ENCODE measurements at regions of chr14 and their contacts with region 1.

Region 1: GRCh38 chr14:91060351-91061055 is at the start of gene RPS6KA5:
- DNase-seq: peak; percentile 100
- H3K4me3 ChIP-seq: peak within 1 kb of the TSS; percentile 68 to 100 (median 71)
- H3K27ac ChIP-seq: peak within 1 kb of the TSS; percentile 75
- H3K4me1 ChIP-seq: peaks cover 22% of the 10 kb centered on the region
- H3K27me3 ChIP-seq: no peaks in the 10 kb centered on the region
- CTCF ChIP-seq: no peak
- POLR2A ChIP-seq: peak; percentile 41
- total RNA-seq, gene RPS6KA5: 5.4 and 8.8 TPM in 2 replicates

Region 2: DNA sequence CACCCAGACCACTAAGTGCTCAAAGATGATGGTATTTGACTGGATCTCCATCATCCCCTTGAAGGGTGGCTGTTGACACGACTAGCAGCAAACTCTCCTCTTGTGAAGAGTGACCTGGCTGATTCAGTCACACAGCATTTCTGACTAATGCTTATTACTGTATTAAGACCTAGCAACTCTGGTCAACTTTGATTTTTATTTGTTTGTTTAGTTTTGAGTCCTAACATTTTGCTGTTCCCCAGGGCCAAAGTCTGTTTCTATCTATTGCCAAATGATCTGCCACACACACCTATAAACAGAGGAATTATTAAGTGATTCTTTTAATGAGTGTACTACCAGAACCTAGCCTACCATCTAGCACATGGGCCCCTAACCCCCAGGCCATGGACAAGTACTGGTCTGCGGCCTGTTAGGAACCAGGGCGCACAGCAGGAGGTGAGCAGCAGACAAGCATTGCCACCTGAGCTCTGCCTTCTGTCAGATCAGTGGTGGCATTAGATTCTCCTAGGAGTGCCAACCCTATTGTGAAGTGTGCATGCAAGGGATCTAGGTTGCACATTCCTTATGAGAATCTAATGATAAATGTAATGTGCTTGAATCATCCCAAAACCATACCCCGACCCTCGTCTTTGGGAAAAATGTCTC is 120.1 kb before region 1 on chr14:
- CTCF ChIA-PET with region 1: no interaction called
- POLR2A ChIA-PET with region 1: no interaction called
- dilution Hi-C with region 1: no loop called
- intact Hi-C with region 1: no loop called
- DNase-seq: no peak
- H3K4me3 ChIP-seq: no peak overlapping the region
- H3K27ac ChIP-seq: no peak overlapping the region
- H3K4me1 ChIP-seq: no peaks in the 10 kb centered on the region
- H3K27me3 ChIP-seq: no peaks in the 10 kb centered on the region
- CTCF ChIP-seq: no peak
- POLR2A ChIP-seq: no peak

Region 3: GRCh38 chr14:91071773-91072172 is 11.3 kb after region 1 on chr14:
- CTCF ChIA-PET with region 1: interaction called, 10 read pairs
- POLR2A ChIA-PET with region 1: no interaction called
- dilution Hi-C with region 1: no loop called
- intact Hi-C with region 1: no loop called
- DNase-seq: no peak
- H3K4me3 ChIP-seq: no peak overlapping the region
- H3K27ac ChIP-seq: no peak overlapping the region
- H3K4me1 ChIP-seq: no peaks in the 10 kb centered on the region
- H3K27me3 ChIP-seq: no peaks in the 10 kb centered on the region
- CTCF ChIP-seq: no peak
- POLR2A ChIP-seq: no peak

Region 4: DNA sequence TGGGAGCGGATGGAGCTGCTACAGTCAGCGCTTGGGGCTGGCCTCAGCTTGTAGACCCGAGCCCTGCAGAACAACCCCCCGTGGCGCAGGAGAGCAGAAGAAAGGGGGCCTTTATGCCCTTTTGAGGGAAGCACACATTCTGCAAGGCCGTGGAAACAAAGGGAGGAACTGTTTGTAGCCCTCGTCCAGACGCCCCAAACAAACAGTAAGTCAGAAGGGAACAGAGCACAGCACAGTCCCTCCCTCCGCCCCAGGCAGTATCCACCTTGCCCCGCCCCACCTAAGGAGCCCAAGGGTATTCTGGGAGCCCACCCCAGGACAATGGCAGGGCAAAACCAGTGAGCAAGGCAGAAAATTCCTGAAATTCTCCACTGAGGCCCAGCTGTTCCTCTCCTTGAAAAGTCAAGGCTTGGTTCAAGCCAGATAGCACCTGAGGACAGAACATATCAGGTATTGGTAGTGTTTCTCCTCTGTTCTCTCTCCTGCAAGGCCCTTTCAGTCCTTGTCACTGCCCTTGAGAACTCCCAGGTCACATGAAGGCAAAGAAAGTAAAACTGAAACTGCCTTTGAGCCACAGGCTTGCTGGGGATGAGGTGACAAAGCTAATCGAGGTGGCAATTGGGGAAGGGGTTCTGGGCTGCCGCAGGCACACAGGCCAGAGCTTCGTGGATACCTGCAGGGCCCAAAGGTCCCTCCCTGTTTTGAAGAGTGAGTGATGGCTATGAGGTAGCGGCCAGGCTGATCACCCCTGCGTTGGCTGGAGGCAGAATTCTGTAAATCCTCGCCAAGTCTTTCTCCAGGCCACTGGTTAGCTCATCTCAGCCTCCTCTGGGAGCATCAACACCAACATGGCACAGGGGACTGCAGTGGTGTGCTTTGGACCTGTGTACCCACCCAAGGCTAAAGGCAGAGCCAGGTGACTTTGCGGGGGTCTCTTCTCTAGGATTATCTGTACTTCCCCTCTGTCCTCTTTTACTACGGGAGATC is 53.9 kb after region 1 on chr14:
- CTCF ChIA-PET with region 1: interaction called, 13 read pairs
- POLR2A ChIA-PET with region 1: interaction called, 3 read pairs
- dilution Hi-C with region 1: no loop called
- intact Hi-C with region 1: loop called (anchors 1 kb)
- DNase-seq: peak; percentile 91
- H3K4me3 ChIP-seq: peak overlapping the region; percentile 25 to 66 (median 31)
- H3K27ac ChIP-seq: peak overlapping the region; percentile 79
- H3K4me1 ChIP-seq: peaks cover 42% of the 10 kb centered on the region
- H3K27me3 ChIP-seq: no peaks in the 10 kb centered on the region
- CTCF ChIP-seq: no peak
- POLR2A ChIP-seq: peak; percentile 68

Region 5: GRCh38 chr14:91138511-91139359 is 78.2 kb after region 1 on chr14:
- CTCF ChIA-PET with region 1: interaction called, 11 read pairs
- POLR2A ChIA-PET with region 1: no interaction called
- dilution Hi-C with region 1: no loop called
- intact Hi-C with region 1: loop called (anchors 1 kb)
- DNase-seq: peak; percentile 82
- H3K4me3 ChIP-seq: no peak overlapping the region
- H3K27ac ChIP-seq: no peak overlapping the region
- H3K4me1 ChIP-seq: peaks cover 22% of the 10 kb centered on the region
- H3K27me3 ChIP-seq: no peaks in the 10 kb centered on the region
- CTCF ChIP-seq: peak; percentile 45 to 52
- POLR2A ChIP-seq: no peak

Region 6: DNA sequence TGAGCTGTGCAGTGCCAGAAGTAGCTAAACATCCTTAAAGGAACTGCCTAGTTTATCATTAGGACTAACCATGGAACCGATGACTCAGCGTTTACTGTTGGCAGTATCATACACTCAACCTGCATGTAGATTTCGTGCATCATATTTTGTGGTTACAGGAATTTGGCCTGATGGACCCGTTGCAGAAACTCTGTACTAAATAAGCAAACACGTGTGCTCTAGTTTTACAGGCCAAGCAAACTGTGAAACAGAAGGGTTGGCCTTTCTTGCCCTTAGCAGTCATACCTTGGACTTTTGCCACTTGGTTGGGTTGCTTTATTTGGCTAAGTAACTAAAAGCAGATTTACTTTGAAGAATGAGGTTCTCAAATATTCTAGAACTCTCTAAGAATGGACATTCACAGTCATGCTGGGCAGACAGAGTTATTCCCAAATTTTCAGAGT is 89.0 kb after region 1 on chr14:
- CTCF ChIA-PET with region 1: interaction called, 4 read pairs
- POLR2A ChIA-PET with region 1: no interaction called
- dilution Hi-C with region 1: no loop called
- intact Hi-C with region 1: loop called (anchors 2 kb)
- DNase-seq: peak; percentile 91
- H3K4me3 ChIP-seq: no peak overlapping the region
- H3K27ac ChIP-seq: peak overlapping the region; percentile 13
- H3K4me1 ChIP-seq: peaks cover 19% of the 10 kb centered on the region
- H3K27me3 ChIP-seq: no peaks in the 10 kb centered on the region
- CTCF ChIP-seq: no peak
- POLR2A ChIP-seq: no peak

Region 7: DNA sequence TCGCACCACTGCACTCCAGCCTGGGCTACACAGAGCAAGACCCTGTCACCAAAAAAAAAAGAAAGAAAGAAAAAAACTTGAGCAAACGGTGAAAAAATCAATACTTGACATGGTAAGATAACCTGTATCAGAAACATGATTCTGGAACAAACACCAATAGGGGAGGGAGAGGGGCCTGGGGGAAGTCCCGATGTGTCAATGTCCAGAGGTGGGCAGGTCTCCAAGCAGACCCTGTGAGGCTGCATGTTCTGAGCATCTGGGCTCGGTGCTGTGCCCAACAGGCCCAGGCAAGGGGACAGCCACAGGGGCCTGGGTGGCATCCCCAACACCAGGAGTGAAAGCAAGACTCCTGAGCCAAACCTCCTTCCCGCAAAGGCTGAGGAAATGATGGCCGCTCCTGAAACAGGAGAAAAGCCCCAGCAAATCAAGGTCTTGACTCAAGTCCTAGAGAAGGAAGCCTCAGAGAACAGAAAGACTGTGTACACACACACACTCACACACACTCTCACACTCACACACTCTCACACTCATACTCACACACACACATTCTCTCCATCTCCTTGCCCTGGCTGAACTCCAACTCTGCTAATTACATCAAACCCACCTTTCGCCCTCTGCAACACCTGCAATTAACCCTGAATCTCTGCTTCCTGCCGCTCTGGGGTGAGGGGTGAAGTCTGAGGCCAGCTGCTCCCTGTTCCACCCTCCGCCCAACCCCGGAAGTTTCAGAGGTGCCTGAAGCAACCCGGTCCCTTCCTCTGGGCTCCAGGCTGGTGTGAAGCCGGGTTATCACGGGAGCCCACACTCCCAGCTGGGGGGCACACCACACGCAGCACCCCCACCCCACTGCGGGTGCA is 336.7 kb after region 1 on chr14:
- CTCF ChIA-PET with region 1: no interaction called
- POLR2A ChIA-PET with region 1: no interaction called
- dilution Hi-C with region 1: no loop called
- intact Hi-C with region 1: no loop called
- DNase-seq: peak; percentile 17
- H3K4me3 ChIP-seq: no peak overlapping the region
- H3K27ac ChIP-seq: no peak overlapping the region
- H3K4me1 ChIP-seq: peaks cover 29% of the 10 kb centered on the region
- H3K27me3 ChIP-seq: no peaks in the 10 kb centered on the region
- CTCF ChIP-seq: no peak
- POLR2A ChIP-seq: no peak

Measured in endothelial cell of umbilical vein (primary cell).